Kidney (tissue), 22 donors: ENCODE measurements at regions of chr6 and their contacts with region 1.

Region 1: DNA sequence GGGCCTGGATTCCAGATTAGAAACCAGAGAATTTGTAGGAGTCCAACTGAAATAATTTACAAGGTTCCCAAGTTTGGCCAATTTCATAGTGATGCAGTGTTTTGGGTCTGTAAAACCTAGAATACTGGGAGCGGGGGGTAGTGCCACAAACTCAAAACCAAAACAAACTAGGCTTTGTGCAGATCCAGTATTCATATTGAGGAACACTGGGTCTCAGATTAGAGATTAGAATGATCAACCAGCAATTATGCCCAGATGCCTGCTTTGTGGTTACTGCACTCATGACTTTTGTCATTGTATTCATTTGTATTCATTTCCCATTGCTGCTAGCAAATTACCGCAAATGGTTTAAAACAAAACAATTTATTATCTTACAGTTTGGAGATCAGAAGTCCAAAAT is 3.2 kb upstream of the NDUFAF4 start:
- DNase-seq: no peak
- H3K4me3 ChIP-seq: no peak overlapping the region
- H3K27ac ChIP-seq: no peak overlapping the region
- H3K4me1 ChIP-seq: peaks cover 2 to 10% (median 5%) of the 10 kb centered on the region in 3 donors
- H3K27me3 ChIP-seq: no peaks in the 10 kb centered on the region
- CTCF ChIP-seq: no peak

Region 2: DNA sequence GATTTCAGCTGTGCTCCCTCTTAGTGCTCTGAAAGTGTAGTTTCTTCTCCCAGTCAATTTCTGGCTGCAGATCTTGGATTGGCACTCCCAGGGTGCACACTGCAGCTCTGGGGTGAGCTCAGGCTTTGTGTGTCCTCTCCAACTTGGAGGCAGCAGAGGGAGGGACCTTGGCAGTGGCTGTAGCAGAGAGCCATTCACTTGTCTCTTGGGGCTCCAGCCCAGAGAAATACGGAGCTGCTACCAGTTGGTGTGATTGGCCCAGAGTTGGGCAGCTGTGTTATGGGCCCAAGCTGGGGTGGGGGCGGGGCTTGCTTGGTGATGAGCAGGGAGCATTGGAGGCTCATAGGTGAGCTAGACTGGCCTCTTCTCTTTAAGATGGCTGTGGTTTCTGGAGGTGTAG is 89.6 kb after region 1 on chr6:
- intact Hi-C with region 1: no loop called
- DNase-seq: no peak
- H3K4me3 ChIP-seq: no peak overlapping the region
- H3K27ac ChIP-seq: no peak overlapping the region
- H3K4me1 ChIP-seq: no peaks in the 10 kb centered on the region
- H3K27me3 ChIP-seq: no peaks in the 10 kb centered on the region
- CTCF ChIP-seq: no peak

Region 3: GRCh38 chr6:97009781-97010492 is 109.1 kb after region 1 on chr6:
- intact Hi-C with region 1: no loop called
- DNase-seq: no peak
- H3K4me3 ChIP-seq: no peak overlapping the region
- H3K27ac ChIP-seq: no peak overlapping the region
- H3K4me1 ChIP-seq: no peaks in the 10 kb centered on the region
- H3K27me3 ChIP-seq: no peaks in the 10 kb centered on the region
- CTCF ChIP-seq: no peak

Region 4: GRCh38 chr6:97053643-97054411 is 153.0 kb after region 1 on chr6:
- intact Hi-C with region 1: loop called (anchors 5 kb)
- DNase-seq: peak in 2 of 5 donors; percentile 19 to 32
- H3K4me3 ChIP-seq: no peak overlapping the region
- H3K27ac ChIP-seq: no peak overlapping the region
- H3K4me1 ChIP-seq: no peaks in the 10 kb centered on the region
- H3K27me3 ChIP-seq: no peaks in the 10 kb centered on the region
- CTCF ChIP-seq: peak; percentile 53